Colonic mucosa (tissue), 4 donors: ENCODE measurements at regions of chr3 and their contacts with region 1.

Region 1: GRCh38 chr3:89098964-89099585 is 8.3 kb upstream of the EPHA3 start:
- DNase-seq: peak; percentile 32
- H3K4me3 ChIP-seq: no peak overlapping the region
- H3K27ac ChIP-seq: no peak overlapping the region
- H3K4me1 ChIP-seq: no peaks in the 10 kb centered on the region
- H3K27me3 ChIP-seq: no peaks in the 10 kb centered on the region
- CTCF ChIP-seq: peak; percentile 95

Region 2: DNA sequence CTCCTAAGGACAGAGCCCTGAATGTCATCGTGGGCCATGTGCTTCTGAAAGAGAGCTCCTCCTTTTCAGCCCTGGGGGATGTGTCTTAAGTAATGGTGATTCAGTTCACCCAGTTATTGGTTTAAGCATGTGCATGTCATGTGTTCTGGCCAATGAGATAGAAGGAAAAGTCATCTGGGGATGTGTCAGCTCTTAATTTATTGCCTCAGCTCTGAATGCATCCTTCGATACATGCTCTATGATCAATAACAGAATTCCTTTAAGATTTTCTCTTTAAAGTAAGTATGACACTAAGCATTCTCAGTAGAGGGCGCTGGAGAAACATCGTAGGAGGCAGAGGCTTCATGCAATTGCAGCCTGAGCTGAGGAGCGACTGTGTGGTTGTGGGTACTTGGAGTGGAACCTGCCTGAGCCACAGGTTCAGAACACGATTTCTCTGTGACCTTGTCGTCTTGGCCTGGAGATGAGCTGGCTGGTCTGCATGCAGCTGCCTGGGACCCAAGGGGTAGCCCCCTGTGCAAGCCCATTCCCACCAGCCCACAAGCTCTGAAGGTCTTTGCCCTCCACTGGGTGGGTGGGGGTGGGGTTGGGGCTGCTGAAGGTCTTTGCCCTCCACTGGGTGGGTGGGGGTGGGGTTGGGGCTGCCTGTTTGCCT is 879.8 kb before region 1 on chr3:
- intact Hi-C with region 1: loop called (anchors 5 kb)
- DNase-seq: peak; percentile 41
- H3K4me3 ChIP-seq: no peak overlapping the region
- H3K27ac ChIP-seq: no peak overlapping the region
- H3K4me1 ChIP-seq: no peaks in the 10 kb centered on the region
- H3K27me3 ChIP-seq: no peaks in the 10 kb centered on the region
- CTCF ChIP-seq: peak; percentile 49

Region 3: GRCh38 chr3:89165636-89166263 is 66.7 kb after region 1 on chr3:
- intact Hi-C with region 1: no loop called
- DNase-seq: no peak
- H3K4me3 ChIP-seq: no peak overlapping the region
- H3K27ac ChIP-seq: no peak overlapping the region
- H3K4me1 ChIP-seq: no peaks in the 10 kb centered on the region
- H3K27me3 ChIP-seq: no peaks in the 10 kb centered on the region
- CTCF ChIP-seq: no peak

Region 4: DNA sequence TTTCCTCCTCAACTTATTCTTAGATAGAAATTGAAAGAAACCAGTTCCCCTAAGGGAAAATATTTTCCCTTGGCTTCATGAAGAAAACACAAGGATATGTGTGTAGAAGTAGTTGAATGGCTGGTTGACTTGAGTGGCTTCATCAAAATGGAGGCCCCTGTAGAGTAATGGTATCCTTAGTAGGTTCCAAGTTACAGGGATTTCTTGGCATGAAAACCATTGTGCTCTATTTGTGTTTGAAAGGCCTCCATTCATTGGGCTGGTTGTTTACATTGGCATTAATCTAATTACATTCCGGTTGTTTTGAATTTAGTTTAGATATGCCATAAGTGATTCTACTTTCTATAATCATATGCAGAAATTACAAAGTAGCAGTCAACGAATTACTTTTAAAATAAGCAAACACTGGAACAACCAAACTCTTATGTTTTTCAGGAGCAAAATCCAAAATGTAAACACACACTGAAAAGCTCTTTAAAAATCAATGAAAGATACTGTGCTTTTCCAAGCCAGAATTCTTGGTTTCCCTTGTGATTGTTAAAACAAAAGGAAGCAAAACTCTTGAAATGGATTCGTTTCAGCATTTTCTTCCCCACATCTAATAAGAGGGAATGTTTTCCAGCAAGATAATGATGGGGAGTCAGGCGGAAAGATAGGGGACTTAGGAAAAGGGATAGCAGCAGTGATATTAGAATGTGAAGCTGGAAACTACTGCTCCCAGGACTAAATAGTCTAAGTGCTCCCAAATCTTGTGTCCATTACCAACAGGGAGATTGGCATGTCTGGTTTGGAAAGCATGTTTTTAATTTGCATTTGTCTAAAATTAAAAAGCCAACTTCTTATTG is 85.3 kb after region 1 on chr3:
- intact Hi-C with region 1: no loop called
- DNase-seq: no peak
- H3K4me3 ChIP-seq: no peak overlapping the region
- H3K27ac ChIP-seq: no peak overlapping the region
- H3K4me1 ChIP-seq: no peaks in the 10 kb centered on the region
- H3K27me3 ChIP-seq: no peaks in the 10 kb centered on the region
- CTCF ChIP-seq: no peak

Region 5: GRCh38 chr3:89216016-89216739 is 117.1 kb after region 1 on chr3:
- intact Hi-C with region 1: no loop called
- DNase-seq: no peak
- H3K4me3 ChIP-seq: no peak overlapping the region
- H3K27ac ChIP-seq: no peak overlapping the region
- H3K4me1 ChIP-seq: no peaks in the 10 kb centered on the region
- H3K27me3 ChIP-seq: no peaks in the 10 kb centered on the region
- CTCF ChIP-seq: no peak